ENCODE measurements at regions of chr20 and their contacts with region 1.

Region 1: DNA sequence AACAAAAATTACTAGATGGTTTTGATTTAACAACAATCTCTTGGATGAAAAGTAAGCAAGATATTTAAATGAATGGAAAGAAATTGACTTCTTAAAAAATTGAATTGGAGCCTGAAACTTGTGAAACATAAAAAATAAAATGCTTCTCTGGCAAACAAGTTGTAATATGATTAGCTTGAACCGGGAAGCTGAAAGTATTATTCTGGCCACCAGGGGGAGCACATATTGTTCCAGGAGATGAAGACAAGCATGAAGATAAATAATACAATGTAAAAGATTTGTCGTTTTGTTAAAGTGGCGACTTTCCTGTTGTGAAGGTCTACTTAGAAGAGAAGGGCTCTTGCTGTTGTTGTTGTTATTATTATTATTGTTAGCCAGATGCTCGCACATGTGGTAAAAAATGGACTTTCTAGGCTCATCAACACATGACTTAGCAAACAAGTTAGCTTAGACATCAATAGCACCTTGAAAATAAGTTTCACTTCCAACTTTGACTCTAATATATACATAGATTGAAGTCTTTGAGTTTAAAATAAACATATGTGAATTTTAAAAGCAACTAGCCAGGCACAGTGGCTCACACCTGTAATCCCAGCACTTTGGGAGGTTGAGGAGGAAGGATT is 14.2 kb downstream of the PAX1 start:
- DNase-seq: peak; percentile 84
- ATAC-seq: peak; percentile 48; the same call in 1 of the 2 replicates
- H3K4me3 ChIP-seq: no peak overlapping the region
- H3K27ac ChIP-seq: no peak overlapping the region
- H3K4me1 ChIP-seq: no peaks in the 10 kb centered on the region
- H3K27me3 ChIP-seq: peaks cover 40% of the 10 kb centered on the region
- CTCF ChIP-seq: peak; percentile 95

Region 2: GRCh38 chr20:22312744-22313346 is 593.1 kb after region 1 on chr20:
- CTCF ChIA-PET with region 1: interaction called, 7 read pairs
- POLR2A ChIA-PET with region 1: no interaction called
- intact Hi-C with region 1: loop called (anchors 1 kb)
- DNase-seq: peak; percentile 66
- ATAC-seq: no peak
- H3K4me3 ChIP-seq: no peak overlapping the region
- H3K27ac ChIP-seq: no peak overlapping the region
- H3K4me1 ChIP-seq: no peaks in the 10 kb centered on the region
- H3K27me3 ChIP-seq: peaks cover 64% of the 10 kb centered on the region
- CTCF ChIP-seq: peak; percentile 83

Region 3: DNA sequence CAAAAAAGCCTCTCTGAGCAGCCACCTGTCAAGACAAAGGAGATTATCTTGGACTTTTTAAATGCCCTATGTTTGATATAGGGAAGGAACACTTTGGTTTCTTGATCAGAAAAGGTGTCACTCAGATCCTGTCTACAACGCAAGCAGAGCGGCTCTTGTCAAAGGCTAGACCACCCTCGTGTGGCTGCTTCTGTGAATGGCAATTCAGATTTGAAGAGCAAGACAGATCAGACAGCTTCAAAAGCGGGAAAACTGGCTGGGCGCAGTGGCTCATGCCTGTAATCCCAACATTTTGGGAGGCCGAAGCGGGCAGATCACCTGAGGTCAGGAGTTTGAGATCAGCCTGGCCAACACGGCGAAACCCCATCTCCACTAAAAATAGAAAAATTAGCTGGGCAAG is 1620.8 kb after region 1 on chr20:
- CTCF ChIA-PET with region 1: interaction called, 10 read pairs
- POLR2A ChIA-PET with region 1: no interaction called
- intact Hi-C with region 1: no loop called
- DNase-seq: peak; percentile 82
- ATAC-seq: peak; percentile 87
- H3K4me3 ChIP-seq: no peak overlapping the region
- H3K27ac ChIP-seq: no peak overlapping the region
- H3K4me1 ChIP-seq: no peaks in the 10 kb centered on the region
- H3K27me3 ChIP-seq: no peaks in the 10 kb centered on the region; the same call in 1 of the 2 replicates
- CTCF ChIP-seq: peak; percentile 76